Thyroid gland (tissue), 4 donors: ENCODE measurements at regions of chr2 and their contacts with region 1.

Region 1: GRCh38 chr2:73085691-73086360 is 14.3 kb upstream of the SFXN5 start:
- DNase-seq: peak; percentile 82 to 83
- H3K4me3 ChIP-seq: no peak overlapping the region
- H3K27ac ChIP-seq: no peak overlapping the region
- H3K4me1 ChIP-seq: no peaks in the 10 kb centered on the region
- H3K27me3 ChIP-seq: no peaks in the 10 kb centered on the region
- CTCF ChIP-seq: peak; percentile 81 to 93 (median 86)
- POLR2A ChIP-seq: no peak

Region 2: GRCh38 chr2:72665448-72665847 is 420.4 kb before region 1 on chr2:
- intact Hi-C with region 1: no loop called
- DNase-seq: no peak
- H3K4me3 ChIP-seq: no peak overlapping the region
- H3K27ac ChIP-seq: no peak overlapping the region
- H3K4me1 ChIP-seq: no peaks in the 10 kb centered on the region
- H3K27me3 ChIP-seq: no peaks in the 10 kb centered on the region
- CTCF ChIP-seq: no peak
- POLR2A ChIP-seq: no peak

Region 3: DNA sequence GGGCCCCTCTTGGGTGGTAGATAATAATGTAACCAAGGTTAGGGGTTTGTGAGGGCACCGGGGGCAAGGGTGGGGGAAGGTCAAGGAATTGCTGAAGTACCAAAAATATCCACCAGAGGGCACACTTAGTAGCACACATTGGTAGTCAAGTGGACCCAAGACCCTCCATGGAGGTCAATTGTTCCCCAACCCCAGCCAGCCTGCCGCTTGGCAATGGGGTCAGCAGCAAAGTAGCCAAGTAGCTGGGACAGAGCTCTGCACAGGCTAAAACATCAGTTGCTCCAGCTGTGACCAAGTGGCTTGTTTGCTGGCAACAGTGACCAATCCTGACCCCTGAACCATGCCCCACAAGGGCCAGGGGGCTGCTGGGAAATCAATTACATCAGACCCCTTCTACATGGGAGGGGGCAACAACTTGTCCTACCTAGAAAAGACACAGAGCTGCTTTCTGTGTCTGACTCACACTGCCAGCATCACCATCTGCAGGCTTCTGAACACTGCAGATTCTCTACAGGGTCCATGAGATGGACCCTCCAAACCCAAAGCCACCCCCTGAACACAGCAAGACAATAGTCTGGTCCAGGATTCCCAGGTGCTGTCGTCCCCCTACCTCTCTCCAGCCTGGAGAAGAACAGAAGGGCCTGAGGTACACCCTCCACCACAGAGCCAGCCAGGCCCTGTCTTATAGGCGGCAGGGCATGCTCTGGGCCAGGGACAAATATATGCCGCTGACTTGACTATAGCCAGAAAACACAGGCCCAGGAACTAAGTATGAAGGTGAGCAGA is 92.5 kb before region 1 on chr2:
- intact Hi-C with region 1: loop called (anchors 5 kb)
- DNase-seq: peak in 1 of 2 donors; percentile 13
- H3K4me3 ChIP-seq: no peak overlapping the region
- H3K27ac ChIP-seq: no peak overlapping the region
- H3K4me1 ChIP-seq: no peaks in the 10 kb centered on the region
- H3K27me3 ChIP-seq: no peaks in the 10 kb centered on the region
- CTCF ChIP-seq: peak; percentile 63 to 82 (median 68)
- POLR2A ChIP-seq: no peak

Region 4: GRCh38 chr2:73163483-73164367 is 77.9 kb after region 1 on chr2:
- intact Hi-C with region 1: loop called (anchors 5 kb)
- DNase-seq: peak; percentile 66 to 69
- H3K4me3 ChIP-seq: no peak overlapping the region
- H3K27ac ChIP-seq: no peak overlapping the region
- H3K4me1 ChIP-seq: no peaks in the 10 kb centered on the region
- H3K27me3 ChIP-seq: no peaks in the 10 kb centered on the region
- CTCF ChIP-seq: peak; percentile 69 to 90 (median 80)
- POLR2A ChIP-seq: no peak